Thyroid gland (tissue), 4 donors: ENCODE measurements at regions of chr5 and their contacts with region 1.

Region 1: GRCh38 chr5:151825445-151825844 is 53.7 kb downstream of the G3BP1 start:
- DNase-seq: peak; percentile 58 to 62
- H3K4me3 ChIP-seq: no peak overlapping the region
- H3K27ac ChIP-seq: no peak overlapping the region
- H3K4me1 ChIP-seq: no peaks in the 10 kb centered on the region
- H3K27me3 ChIP-seq: no peaks in the 10 kb centered on the region
- CTCF ChIP-seq: peak; percentile 74 to 93 (median 85)
- POLR2A ChIP-seq: no peak

Region 2: DNA sequence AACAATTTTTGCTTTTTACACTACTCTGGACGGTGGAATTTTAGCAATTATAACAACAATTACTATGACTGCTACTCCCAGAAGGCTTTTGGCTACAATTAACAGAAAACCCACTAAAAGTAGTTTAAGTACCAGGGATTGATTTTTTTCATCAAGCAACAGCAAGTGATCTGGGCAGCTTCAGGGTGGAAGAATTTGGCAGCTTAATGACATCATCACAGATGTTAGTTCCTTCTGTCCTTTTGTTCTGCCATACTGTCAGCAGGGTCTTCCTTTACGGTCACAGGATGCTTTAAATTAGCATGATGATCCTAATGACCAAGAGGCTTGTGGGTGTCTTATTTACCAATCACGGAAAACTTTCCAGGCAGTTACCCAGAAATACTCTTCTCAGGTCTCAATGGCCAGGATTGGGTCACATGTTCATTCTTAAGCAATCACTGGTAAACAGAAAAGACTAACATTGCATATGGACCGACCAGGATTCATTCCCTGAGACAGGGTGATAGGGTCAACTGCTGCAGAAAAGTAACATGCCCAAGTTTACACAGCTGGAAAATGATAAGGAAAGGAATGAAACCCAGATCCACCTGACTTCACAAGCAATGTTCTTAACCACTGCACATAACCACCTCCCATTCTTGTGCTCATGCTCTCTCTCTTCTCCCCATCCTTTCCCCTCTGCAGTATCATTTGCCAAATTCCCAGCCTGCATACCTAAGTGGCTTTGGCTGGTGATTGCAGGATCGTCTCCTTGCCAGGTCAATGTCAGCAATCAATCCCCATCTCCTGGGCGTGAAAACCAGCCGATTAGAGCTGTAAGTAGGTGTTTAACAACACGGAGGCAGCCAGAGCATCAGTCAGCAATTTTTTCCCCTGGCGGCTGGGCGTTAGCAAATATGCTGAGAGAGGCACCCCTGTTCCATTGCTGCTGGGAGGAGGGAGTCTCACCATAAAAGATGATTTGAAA is 360.1 kb after region 1 on chr5:
- intact Hi-C with region 1: no loop called
- DNase-seq: no peak
- H3K4me3 ChIP-seq: no peak overlapping the region
- H3K27ac ChIP-seq: no peak overlapping the region
- H3K4me1 ChIP-seq: no peaks in the 10 kb centered on the region
- H3K27me3 ChIP-seq: no peaks in the 10 kb centered on the region
- CTCF ChIP-seq: no peak
- POLR2A ChIP-seq: no peak

Region 3: DNA sequence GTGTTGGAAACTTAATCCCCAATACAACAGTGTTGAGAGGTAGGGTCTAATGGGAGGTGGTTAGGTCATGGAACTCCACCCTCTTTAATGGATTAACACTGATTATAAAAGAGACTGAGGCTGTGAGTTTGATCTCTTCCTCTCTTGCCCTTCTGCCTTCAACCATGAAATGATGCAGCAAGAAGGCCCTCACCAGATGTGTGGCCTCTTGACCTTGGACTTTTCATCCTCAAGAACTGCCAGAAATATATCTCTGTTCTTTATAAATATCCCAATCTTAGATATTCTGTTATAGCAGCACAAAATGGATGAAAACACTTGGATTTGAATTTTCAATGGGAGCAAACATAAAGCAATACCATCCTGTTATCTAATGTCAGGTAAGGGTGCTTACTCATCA is 512.0 kb after region 1 on chr5:
- intact Hi-C with region 1: no loop called
- DNase-seq: no peak
- H3K4me3 ChIP-seq: no peak overlapping the region
- H3K27ac ChIP-seq: no peak overlapping the region
- H3K4me1 ChIP-seq: no peaks in the 10 kb centered on the region
- H3K27me3 ChIP-seq: no peaks in the 10 kb centered on the region
- CTCF ChIP-seq: no peak
- POLR2A ChIP-seq: no peak

Region 4: GRCh38 chr5:152505442-152506042 is 680.1 kb after region 1 on chr5:
- intact Hi-C with region 1: loop called (anchors 2 kb)
- DNase-seq: peak; percentile 65 to 75
- H3K4me3 ChIP-seq: no peak overlapping the region
- H3K27ac ChIP-seq: no peak overlapping the region
- H3K4me1 ChIP-seq: no peaks in the 10 kb centered on the region
- H3K27me3 ChIP-seq: no peaks in the 10 kb centered on the region
- CTCF ChIP-seq: peak in 5 of 6 experiments; percentile 32 to 67 (median 60)
- POLR2A ChIP-seq: no peak